Heart left ventricle (tissue), 16 donors: ENCODE measurements at regions of chr10 and their contacts with region 1.

Region 1: GRCh38 chr10:70461215-70461986 is 17.2 kb upstream of the PALD1 start:
- DNase-seq: peak in 3 of 5 donors; percentile 55 to 71 (median 55)
- ATAC-seq: peak; percentile 35 to 66 (median 42)
- H3K4me3 ChIP-seq: no peak overlapping the region
- H3K27ac ChIP-seq: no peak overlapping the region
- H3K4me1 ChIP-seq: peaks cover 0 to 51% (median 30%) of the 10 kb centered on the region in 12 donors
- H3K27me3 ChIP-seq: peaks cover 0 to 17% (median 0%) of the 10 kb centered on the region in 9 donors
- CTCF ChIP-seq: peak; percentile 73 to 93 (median 86)
- POLR2A ChIP-seq: no peak

Region 2: GRCh38 chr10:70221030-70221429 is 240.4 kb before region 1 on chr10:
- intact Hi-C with region 1: loop called in 1 of 10 experiments (anchors 5 kb)
- DNase-seq: no peak
- ATAC-seq: no peak
- H3K4me3 ChIP-seq: peak overlapping the region in 1 of 12 donors; percentile 35
- H3K27ac ChIP-seq: peak overlapping the region in 4 of 12 donors; percentile 20 to 40 (median 32)
- H3K4me1 ChIP-seq: peaks cover 0 to 20% (median 4%) of the 10 kb centered on the region in 12 donors
- H3K27me3 ChIP-seq: no peaks in the 10 kb centered on the region
- CTCF ChIP-seq: no peak
- POLR2A ChIP-seq: no peak

Region 3: DNA sequence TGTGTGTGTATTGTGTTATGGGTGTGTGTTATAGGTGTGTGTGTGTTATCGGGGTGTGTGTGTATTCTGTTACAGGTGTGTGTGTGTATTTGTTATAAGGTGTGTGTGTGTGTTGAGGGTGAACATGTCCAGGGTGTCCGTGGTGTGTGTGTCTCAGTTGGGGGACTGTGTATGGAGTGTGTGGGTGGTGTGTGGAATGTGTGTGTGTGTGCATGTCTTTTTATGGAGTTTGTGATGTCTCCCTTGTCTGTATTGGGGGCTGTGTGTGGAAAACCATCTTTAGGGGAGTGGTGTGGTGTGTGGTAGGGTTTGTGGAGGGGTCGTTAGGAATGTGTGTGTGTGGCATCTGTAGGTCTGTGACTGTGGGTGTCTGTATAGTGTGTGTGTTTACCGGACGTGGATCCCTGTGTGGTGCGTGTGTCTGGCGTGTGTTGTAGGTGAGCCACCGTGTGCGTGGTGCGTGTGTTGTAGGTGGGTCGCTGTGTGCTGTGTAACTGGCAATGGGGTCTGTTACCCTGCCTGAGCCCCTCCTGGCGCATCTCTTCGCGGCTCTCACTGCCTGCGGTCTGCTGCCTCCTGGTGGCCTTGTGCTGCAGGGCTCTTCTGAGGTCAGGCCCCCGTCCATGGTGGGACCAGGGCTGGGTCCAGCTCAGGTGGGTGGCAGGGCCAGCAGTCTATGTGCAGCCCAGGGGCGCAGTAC is 78.8 kb after region 1 on chr10:
- intact Hi-C with region 1: loop called in 9 of 10 experiments (anchors 1 to 2 kb)
- DNase-seq: peak in 2 of 5 donors; percentile 45 to 67
- ATAC-seq: peak in 3 of 4 donors; percentile 32 to 72 (median 53)
- H3K4me3 ChIP-seq: no peak overlapping the region
- H3K27ac ChIP-seq: no peak overlapping the region
- H3K4me1 ChIP-seq: no peaks in the 10 kb centered on the region
- H3K27me3 ChIP-seq: no peaks in the 10 kb centered on the region
- CTCF ChIP-seq: peak; percentile 58 to 80 (median 68)
- POLR2A ChIP-seq: no peak

Region 4: DNA sequence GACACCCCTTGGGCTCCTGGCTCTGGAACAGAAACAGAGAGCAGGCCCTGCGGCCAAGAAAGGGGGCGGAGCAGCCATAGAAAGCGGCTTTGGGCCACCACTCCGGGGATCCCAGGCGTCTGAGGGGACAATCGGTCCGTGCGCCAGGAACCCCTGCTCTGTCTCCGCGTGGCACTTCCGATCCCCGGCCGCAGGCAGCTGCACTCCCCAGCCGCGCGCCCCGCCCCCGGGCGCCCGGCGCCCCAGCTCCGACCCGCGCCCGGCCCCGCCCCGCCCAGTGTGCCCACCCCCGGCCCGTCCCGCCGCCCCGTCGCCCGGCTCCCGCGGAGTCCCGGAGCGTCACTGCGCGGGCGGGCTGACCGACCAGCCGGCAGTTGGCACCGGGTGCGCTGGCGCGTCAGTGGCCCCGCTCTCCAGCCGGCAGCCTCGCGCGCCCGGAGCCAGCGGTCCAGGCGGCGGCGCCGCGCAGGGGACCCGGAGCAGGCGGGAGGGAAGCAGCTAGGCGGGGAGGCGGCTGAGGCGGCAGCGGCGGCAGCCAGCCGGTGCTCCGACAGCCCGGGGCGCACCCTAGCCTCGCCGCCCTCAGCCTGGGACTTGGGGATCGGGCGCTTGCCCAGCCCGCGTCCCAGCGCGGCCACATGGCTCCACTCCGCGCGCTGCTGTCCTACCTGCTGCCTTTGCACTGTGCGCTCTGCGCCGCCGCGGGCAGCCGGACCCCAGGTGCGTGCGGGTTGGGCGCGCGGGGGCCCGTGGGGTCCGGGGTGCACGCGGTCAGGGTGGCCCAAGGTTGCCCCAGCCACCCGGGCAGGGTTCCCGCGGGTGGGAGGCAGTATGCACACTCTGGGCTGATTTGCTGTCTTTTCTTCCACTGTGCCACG is 211.0 kb after region 1 on chr10 and contains the start of gene ADAMTS14:
- intact Hi-C with region 1: loop called in 1 of 10 experiments (anchors 10 kb)
- DNase-seq: peak in 4 of 5 donors; percentile 45 to 56 (median 52)
- ATAC-seq: peak in 3 of 4 donors; percentile 26 to 68 (median 65)
- H3K4me3 ChIP-seq: peak within 1 kb of the TSS; percentile 10 to 57 (median 49)
- H3K27ac ChIP-seq: peak within 1 kb of the TSS in 4 of 12 donors; percentile 34 to 71 (median 38)
- H3K4me1 ChIP-seq: peaks cover 0 to 33% (median 17%) of the 10 kb centered on the region in 12 donors
- H3K27me3 ChIP-seq: peaks cover 0 to 23% (median 0%) of the 10 kb centered on the region in 9 donors
- CTCF ChIP-seq: no peak
- POLR2A ChIP-seq: no peak
- total RNA-seq, gene ADAMTS14: 0.16 to 3.8 (median 0.47) TPM in 8 of 9 donors, not detected in the other

Region 5: DNA sequence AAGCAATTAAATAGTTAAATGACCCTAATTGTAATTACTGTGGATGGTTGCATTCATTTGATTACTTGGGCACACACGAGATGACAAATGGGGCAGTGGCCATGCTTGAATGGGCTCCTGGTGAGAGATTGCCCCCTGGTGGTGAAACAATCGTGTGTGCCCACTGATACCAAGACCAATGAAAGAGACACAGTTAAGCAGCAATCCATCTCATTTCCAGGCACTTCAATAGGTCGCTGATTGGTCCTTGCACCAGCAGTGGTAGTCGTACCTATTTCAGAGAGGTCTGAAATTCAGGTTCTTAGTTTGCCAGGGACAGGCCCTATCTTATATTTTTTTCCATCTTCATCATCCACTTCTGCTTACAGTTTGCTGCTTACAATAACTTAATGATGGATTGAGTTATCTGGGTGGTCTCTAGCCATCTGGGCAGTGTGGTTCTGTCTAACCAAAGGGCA is 418.7 kb after region 1 on chr10:
- intact Hi-C with region 1: loop called in 5 of 10 experiments (anchors 5 to 10 kb)
- DNase-seq: peak; percentile 70 to 77 (median 75)
- ATAC-seq: peak; percentile 34 to 80 (median 76)
- H3K4me3 ChIP-seq: no peak overlapping the region
- H3K27ac ChIP-seq: no peak overlapping the region
- H3K4me1 ChIP-seq: peaks cover 0 to 16% (median 0%) of the 10 kb centered on the region in 12 donors
- H3K27me3 ChIP-seq: no peaks in the 10 kb centered on the region
- CTCF ChIP-seq: peak; percentile 82 to 95 (median 92)
- POLR2A ChIP-seq: no peak